Astrocyte of the cerebellum (primary cell): ENCODE measurements at regions of chr7 and their contacts with region 1.

Region 1: GRCh38 chr7:109331423-109331822 is 761.7 kb downstream of the DNAJB9 start:
- DNase-seq: no peak
- H3K4me3 ChIP-seq: no peak overlapping the region
- CTCF ChIP-seq: no peak

Region 2: GRCh38 chr7:109246330-109247077 is 84.9 kb before region 1 on chr7:
- in situ Hi-C with region 1: loop called (anchors 5 kb)
- DNase-seq: peak; percentile 51
- H3K4me3 ChIP-seq: no peak overlapping the region
- CTCF ChIP-seq: no peak

Region 3: DNA sequence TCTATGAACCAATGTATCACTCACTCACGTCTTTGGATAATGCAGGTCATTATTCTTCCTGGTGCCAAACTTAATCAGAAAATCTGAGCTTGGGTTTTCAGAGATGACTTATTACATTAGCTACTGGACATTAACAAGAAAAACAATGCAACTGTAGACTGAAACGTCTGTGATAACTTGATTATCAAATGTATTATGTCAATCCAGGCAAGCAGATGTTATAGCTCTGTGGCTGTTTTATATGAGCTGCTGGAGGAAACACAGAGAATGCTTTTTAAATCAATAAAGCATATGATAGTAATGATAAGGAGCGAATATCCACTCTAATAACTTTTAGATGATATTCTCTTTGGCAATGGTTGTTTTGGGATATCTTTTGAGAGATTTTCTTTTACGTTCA is 362.7 kb after region 1 on chr7:
- in situ Hi-C with region 1: no loop called
- DNase-seq: no peak
- H3K4me3 ChIP-seq: no peak overlapping the region
- CTCF ChIP-seq: no peak